PC-9 (cell line): ENCODE measurements at regions of chr17 and their contacts with region 1.

Region 1: DNA sequence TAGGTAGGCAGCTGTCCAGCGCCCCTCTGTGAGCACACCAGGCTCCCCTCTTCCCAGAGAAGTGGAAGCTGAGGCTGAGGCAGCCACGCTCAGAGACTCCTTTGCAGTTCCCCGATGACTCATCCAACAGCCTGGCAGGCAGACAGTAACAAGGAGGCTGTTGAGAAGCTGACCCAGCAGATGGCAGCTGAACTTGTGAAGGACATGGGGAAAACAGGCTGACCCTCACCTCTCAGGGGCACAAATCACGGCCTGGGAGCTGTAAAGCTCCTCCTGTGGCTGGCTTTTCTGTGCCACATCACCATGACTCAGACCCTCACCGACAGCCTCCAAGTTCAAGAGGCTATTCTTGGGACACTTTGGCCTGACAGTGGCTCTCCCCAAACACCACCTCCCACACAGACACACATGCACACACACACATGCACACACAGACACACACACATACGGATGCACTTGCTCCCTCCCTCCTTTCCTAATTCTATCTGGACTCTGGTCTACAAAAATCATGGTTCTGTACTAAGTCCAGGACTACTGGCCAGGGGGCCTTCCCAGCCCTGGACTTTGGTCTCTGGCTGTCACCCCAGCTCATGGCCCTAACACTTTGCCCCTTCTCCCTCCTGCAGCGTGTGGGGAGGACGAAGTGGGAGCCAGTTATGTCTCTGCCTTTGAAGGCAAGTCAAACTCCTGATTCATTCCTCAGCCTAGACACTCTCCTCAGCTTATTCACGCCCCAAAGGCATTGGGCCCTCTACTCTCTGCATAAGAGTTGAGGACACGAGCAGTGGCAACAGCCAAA is 23.2 kb downstream of the MAP3K14 start:
- DNase-seq: peak; percentile 83 to 96
- H3K4me3 ChIP-seq: no peak overlapping the region
- H3K27ac ChIP-seq: peak overlapping the region; percentile 82
- H3K4me1 ChIP-seq: peaks cover 61% of the 10 kb centered on the region
- H3K27me3 ChIP-seq: no peaks in the 10 kb centered on the region
- CTCF ChIP-seq: no peak; the same call in 1 of the 2 replicates

Region 2: GRCh38 chr17:45277216-45277849 is 16.3 kb before region 1 on chr17:
- CTCF ChIA-PET with region 1: interaction called, 4 read pairs
- POLR2A ChIA-PET with region 1: no interaction called
- intact Hi-C with region 1: loop called (anchors 2 kb)
- DNase-seq: peak; percentile 88 to 89
- H3K4me3 ChIP-seq: no peak overlapping the region
- H3K27ac ChIP-seq: peak overlapping the region; percentile 17
- H3K4me1 ChIP-seq: peaks cover 18% of the 10 kb centered on the region
- H3K27me3 ChIP-seq: no peaks in the 10 kb centered on the region
- CTCF ChIP-seq: peak; percentile 95

Region 3: GRCh38 chr17:45311760-45312476 is 18.3 kb after region 1 on chr17:
- CTCF ChIA-PET with region 1: interaction called, 4 read pairs
- POLR2A ChIA-PET with region 1: interaction called, 12 read pairs
- intact Hi-C with region 1: loop called (anchors 1 kb)
- DNase-seq: peak; percentile 80 to 99
- H3K4me3 ChIP-seq: peak overlapping the region; percentile 40
- H3K27ac ChIP-seq: peak overlapping the region; percentile 80
- H3K4me1 ChIP-seq: peaks cover 77% of the 10 kb centered on the region
- H3K27me3 ChIP-seq: no peaks in the 10 kb centered on the region
- CTCF ChIP-seq: no peak

Region 4: GRCh38 chr17:45371414-45372327 is 78.1 kb after region 1 on chr17:
- CTCF ChIA-PET with region 1: interaction called, 3 read pairs
- POLR2A ChIA-PET with region 1: interaction called, 4 read pairs
- intact Hi-C with region 1: loop called (anchors 1 kb)
- DNase-seq: peak; percentile 96 to 97
- H3K4me3 ChIP-seq: peak overlapping the region; percentile 45
- H3K27ac ChIP-seq: peak overlapping the region; percentile 99
- H3K4me1 ChIP-seq: peaks cover 73% of the 10 kb centered on the region
- H3K27me3 ChIP-seq: no peaks in the 10 kb centered on the region
- CTCF ChIP-seq: 0 out of 2 replicates have a peak, but pooled peaks have one; percentile 1

Region 5: DNA sequence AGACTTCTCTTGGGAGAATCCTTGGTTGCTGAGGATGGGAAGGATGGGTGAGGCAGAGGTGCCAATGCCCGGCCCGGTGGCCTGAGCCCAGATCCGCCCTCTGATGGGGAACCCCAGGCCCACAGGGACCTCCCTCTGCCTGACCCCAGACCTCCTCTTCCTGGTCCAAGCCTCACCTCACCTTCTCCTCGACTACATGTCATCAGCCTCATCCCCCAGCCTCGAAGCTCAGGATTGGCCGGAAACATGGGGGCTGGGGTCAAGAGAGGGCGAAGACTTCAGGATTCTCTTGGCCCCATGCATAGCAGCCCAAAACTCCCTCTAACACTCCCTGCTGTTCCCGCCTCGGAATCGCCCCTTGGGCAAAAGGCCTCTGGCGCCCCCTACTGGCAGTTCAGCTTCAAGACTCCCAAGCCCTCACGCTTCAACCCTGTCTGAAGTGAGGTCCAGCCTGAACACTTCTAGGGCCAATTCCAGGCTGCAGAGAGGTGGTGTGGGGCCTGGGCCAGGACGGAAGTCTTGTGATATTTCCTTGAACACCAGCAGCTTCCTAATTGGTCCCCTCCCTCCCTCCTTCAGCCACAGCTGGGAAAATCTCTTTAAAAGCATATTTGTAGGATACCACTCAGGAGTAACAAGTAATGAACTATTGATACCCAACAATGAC is 91.9 kb after region 1 on chr17:
- CTCF ChIA-PET with region 1: no interaction called
- POLR2A ChIA-PET with region 1: no interaction called
- intact Hi-C with region 1: loop called (anchors 1 kb)
- DNase-seq: peak; percentile 65 to 85
- H3K4me3 ChIP-seq: no peak overlapping the region
- H3K27ac ChIP-seq: no peak overlapping the region
- H3K4me1 ChIP-seq: peaks cover 22% of the 10 kb centered on the region
- H3K27me3 ChIP-seq: no peaks in the 10 kb centered on the region
- CTCF ChIP-seq: peak; percentile 100